Heart right ventricle (tissue), 16 donors: ENCODE measurements at regions of chr18 and their contacts with region 1.

Region 1: GRCh38 chr18:55589625-55590291 is 1.8 kb upstream of the TCF4 start:
- DNase-seq: peak; percentile 97 to 98
- ATAC-seq: peak; percentile 95 to 99 (median 97)
- H3K4me3 ChIP-seq: peak overlapping the region; percentile 49 to 78 (median 73)
- H3K27ac ChIP-seq: peak overlapping the region; percentile 69 to 95 (median 87)
- H3K4me1 ChIP-seq: peaks cover 0 to 29% (median 12%) of the 10 kb centered on the region in 9 donors
- H3K27me3 ChIP-seq: no peaks in the 10 kb centered on the region
- CTCF ChIP-seq: peak in 2 of 9 donors; percentile 15 to 43

Region 2: DNA sequence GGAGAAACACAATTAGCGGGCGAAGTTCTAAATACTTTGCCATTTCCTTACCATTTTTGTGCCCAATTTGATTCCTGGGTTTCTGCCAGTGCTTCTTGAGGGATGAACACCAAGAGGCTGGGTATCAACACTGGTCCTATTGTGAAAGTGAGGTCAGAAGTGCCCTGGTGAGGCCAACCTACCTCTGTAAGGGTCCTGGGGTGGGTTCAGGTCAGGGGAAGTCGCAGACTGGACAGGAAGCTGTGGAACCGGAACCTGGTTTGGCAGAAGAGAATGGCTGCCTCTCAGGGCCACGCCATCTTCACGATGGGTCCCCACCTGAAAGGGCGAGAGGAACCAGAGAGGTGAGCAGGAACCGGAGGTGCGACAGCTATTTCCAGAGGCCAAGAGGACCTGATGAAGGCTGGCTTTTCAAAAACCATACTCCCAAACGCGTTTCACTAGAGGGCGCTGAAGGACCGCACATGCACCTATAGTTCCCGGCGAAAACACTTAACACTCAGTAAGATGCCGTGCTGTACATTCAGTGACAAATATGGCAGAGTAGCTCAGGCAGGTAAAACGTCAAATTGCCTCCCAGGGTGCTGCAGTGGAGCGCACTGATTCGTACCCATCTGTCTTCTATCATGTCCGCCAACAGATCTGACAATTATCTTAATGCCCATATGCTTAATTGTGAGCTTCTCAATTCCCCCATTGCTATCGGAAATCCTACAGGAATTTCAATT is 355.2 kb before region 1 on chr18:
- intact Hi-C with region 1: loop called in 3 of 10 experiments (anchors 5 to 10 kb)
- DNase-seq: peak; percentile 60 to 85
- ATAC-seq: peak; percentile 59 to 92 (median 86)
- H3K4me3 ChIP-seq: peak overlapping the region in 1 of 10 donors; percentile 3
- H3K27ac ChIP-seq: peak overlapping the region; percentile 39 to 89 (median 62)
- H3K4me1 ChIP-seq: peaks cover 3 to 63% (median 42%) of the 10 kb centered on the region in 9 donors
- H3K27me3 ChIP-seq: no peaks in the 10 kb centered on the region
- CTCF ChIP-seq: peak; percentile 59 to 84 (median 76)

Region 3: GRCh38 chr18:55322178-55322735 is 267.5 kb before region 1 on chr18:
- intact Hi-C with region 1: loop called in 5 of 10 experiments (anchors 2 to 10 kb)
- DNase-seq: peak; percentile 84 to 91
- ATAC-seq: peak; percentile 80 to 94 (median 88)
- H3K4me3 ChIP-seq: peak overlapping the region; percentile 29 to 79 (median 64)
- H3K27ac ChIP-seq: peak overlapping the region; percentile 87 to 98 (median 94)
- H3K4me1 ChIP-seq: peaks cover 2 to 52% (median 37%) of the 10 kb centered on the region in 9 donors
- H3K27me3 ChIP-seq: no peaks in the 10 kb centered on the region
- CTCF ChIP-seq: peak in 6 of 9 donors; percentile 13 to 52 (median 34)

Region 4: GRCh38 chr18:55415258-55415871 is 174.4 kb before region 1 on chr18:
- intact Hi-C with region 1: loop called in 9 of 10 experiments (anchors 1 to 5 kb)
- DNase-seq: peak; percentile 88 to 91
- ATAC-seq: peak; percentile 87 to 93 (median 90)
- H3K4me3 ChIP-seq: no peak overlapping the region
- H3K27ac ChIP-seq: peak overlapping the region in 5 of 10 donors; percentile 14 to 91 (median 54)
- H3K4me1 ChIP-seq: peaks cover 0 to 78% (median 56%) of the 10 kb centered on the region in 9 donors
- H3K27me3 ChIP-seq: no peaks in the 10 kb centered on the region
- CTCF ChIP-seq: peak; percentile 82 to 98 (median 92)

Region 5: GRCh38 chr18:55515941-55516710 is 73.6 kb before region 1 on chr18:
- intact Hi-C with region 1: loop called in 6 of 10 experiments (anchors 2 to 10 kb)
- DNase-seq: no peak
- ATAC-seq: peak in 3 of 8 donors; percentile 21 to 41 (median 40)
- H3K4me3 ChIP-seq: no peak overlapping the region
- H3K27ac ChIP-seq: peak overlapping the region in 7 of 10 donors; percentile 6 to 73 (median 17)
- H3K4me1 ChIP-seq: peaks cover 0 to 60% (median 32%) of the 10 kb centered on the region in 9 donors
- H3K27me3 ChIP-seq: no peaks in the 10 kb centered on the region
- CTCF ChIP-seq: no peak

Region 6: DNA sequence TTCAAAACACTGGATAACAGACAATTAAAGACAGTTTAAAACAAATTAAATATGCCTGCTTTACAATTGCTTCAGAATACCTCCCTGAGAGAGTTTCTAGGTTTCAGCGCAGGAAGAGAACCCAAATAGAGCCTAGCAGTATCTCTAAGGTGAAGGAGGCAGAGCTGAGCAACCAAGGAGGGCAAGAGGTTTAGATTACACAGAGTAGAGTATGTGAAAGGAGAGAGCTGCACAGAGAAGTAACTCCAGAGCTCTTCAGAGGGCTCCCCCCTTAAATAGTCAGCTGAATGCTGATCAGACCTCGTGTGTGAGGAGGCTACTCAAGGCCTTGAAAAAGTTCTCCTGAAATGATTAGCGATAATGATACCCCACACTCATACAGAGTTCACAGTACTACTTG is 384.8 kb after region 1 on chr18:
- intact Hi-C with region 1: loop called in 1 of 10 experiments (anchors 10 kb)
- DNase-seq: no peak
- ATAC-seq: no peak
- H3K4me3 ChIP-seq: no peak overlapping the region
- H3K27ac ChIP-seq: no peak overlapping the region
- H3K4me1 ChIP-seq: no peaks in the 10 kb centered on the region
- H3K27me3 ChIP-seq: no peaks in the 10 kb centered on the region
- CTCF ChIP-seq: no peak